Activated CD4-positive, alpha-beta T cell treated with anti-CD3 and anti-CD28 coated beads for 36 hours (primary cell): ENCODE measurements at regions of chr22 and their contacts with region 1.

Region 1: DNA sequence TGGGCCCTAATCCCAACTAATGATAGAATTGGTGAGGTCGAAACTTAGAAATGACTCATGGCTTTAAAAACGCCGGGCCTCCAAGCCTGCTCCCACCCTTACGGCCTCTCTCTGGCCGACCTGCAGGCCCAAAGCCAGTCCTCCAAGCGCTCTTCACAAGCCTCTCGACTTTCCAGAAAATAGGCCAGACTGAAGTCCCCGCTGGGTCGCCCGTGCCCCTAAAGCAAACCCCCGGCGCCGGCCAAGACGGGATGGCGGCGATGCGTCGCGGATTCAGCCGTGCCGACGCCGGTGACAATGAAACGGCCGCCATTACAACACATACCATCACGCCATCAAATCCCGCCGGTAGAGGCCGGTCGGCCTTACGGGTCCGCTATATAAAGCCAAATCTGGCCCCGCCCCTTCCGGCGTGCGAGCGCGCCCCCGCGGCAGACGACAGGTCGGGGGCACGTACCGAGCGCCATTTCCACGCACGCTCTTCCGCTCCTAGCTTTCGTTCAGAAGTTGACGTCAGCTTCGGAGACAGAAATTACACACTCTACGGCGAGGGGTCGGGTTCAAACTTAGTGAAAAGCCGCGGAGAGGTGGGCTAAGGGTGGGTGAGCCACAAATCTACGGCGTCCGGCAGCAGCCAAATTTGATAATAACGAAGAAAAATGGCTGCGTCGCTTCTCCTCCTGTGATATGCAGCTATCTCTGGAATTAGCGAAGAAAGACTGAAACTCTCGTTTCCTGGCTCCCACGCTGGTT is at the start of gene RPL3:
- DNase-seq: peak; percentile 98
- ATAC-seq: peak; percentile 83
- H3K4me3 Mint-ChIP-seq: peak within 1 kb of the TSS; percentile 100
- H3K27ac Mint-ChIP-seq: peak within 1 kb of the TSS; percentile 100
- H3K4me1 Mint-ChIP-seq: peaks cover 32% of the 10 kb centered on the region
- H3K27me3 Mint-ChIP-seq: no peaks in the 10 kb centered on the region
- total RNA-seq, gene RPL3: 2,519 to 3,155 TPM

Region 2: GRCh38 chr22:38705235-38706100 is 614.0 kb before region 1 on chr22 and contains the start of gene GTPBP1:
- CTCF ChIA-PET with region 1: no interaction called
- POLR2A ChIA-PET with region 1: no interaction called
- intact Hi-C with region 1: loop called (anchors 2 kb)
- DNase-seq: peak; percentile 98
- ATAC-seq: peak; percentile 89
- H3K4me3 Mint-ChIP-seq: peak within 1 kb of the TSS; percentile 93
- H3K27ac Mint-ChIP-seq: peak within 1 kb of the TSS; percentile 97
- H3K4me1 Mint-ChIP-seq: peaks cover 53% of the 10 kb centered on the region
- H3K27me3 Mint-ChIP-seq: no peaks in the 10 kb centered on the region
- total RNA-seq, gene GTPBP1: 88.6 to 92.8 TPM

Region 3: DNA sequence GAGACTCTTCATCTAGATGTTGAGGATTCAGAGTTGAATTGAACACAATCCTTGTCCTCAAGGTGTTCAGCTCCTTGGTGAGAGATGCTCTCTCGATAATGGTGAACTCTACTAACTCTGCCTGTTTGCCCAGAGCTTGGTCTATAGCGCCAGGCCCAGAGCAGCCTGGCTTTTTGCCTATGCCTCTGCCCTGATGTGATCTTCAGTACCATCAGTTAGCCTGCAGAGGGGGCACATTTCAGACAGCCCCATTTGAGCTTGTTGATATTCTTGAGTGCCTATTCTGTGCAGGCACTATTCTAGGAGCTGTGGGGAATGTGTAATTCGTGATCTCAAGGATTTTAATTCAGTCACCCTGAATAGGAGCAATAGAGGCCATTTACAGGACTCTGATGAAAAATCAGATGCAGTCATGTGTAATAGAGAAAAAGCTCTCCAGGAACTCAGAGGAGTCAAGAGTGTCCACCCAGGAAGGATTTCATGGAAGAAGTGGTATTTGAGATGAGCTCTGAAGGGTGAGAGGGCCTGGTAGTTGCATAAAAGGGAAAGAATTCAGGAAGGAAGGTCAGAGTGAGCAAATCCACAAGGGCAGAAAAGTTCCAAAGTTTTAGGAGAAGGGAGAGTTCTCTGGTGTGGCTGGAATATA is 594.4 kb before region 1 on chr22:
- CTCF ChIA-PET with region 1: no interaction called
- POLR2A ChIA-PET with region 1: no interaction called
- intact Hi-C with region 1: no loop called
- DNase-seq: peak; percentile 56
- ATAC-seq: peak; percentile 79
- H3K4me3 Mint-ChIP-seq: no peak overlapping the region
- H3K27ac Mint-ChIP-seq: peak overlapping the region; percentile 51
- H3K4me1 Mint-ChIP-seq: no peaks in the 10 kb centered on the region
- H3K27me3 Mint-ChIP-seq: no peaks in the 10 kb centered on the region

Region 4: GRCh38 chr22:39152511-39153219 is 166.8 kb before region 1 on chr22 and contains the start of gene CBX7:
- CTCF ChIA-PET with region 1: interaction called, 4 read pairs
- POLR2A ChIA-PET with region 1: interaction called, 5 read pairs
- intact Hi-C with region 1: loop called (anchors 1 to 5 kb)
- DNase-seq: peak; percentile 95
- ATAC-seq: peak; percentile 83
- H3K4me3 Mint-ChIP-seq: peak within 1 kb of the TSS; percentile 76
- H3K27ac Mint-ChIP-seq: peak within 1 kb of the TSS; percentile 72
- H3K4me1 Mint-ChIP-seq: peaks cover 40% of the 10 kb centered on the region
- H3K27me3 Mint-ChIP-seq: peaks cover 13% of the 10 kb centered on the region
- total RNA-seq, gene CBX7: 19.9 to 20.3 TPM

Region 5: DNA sequence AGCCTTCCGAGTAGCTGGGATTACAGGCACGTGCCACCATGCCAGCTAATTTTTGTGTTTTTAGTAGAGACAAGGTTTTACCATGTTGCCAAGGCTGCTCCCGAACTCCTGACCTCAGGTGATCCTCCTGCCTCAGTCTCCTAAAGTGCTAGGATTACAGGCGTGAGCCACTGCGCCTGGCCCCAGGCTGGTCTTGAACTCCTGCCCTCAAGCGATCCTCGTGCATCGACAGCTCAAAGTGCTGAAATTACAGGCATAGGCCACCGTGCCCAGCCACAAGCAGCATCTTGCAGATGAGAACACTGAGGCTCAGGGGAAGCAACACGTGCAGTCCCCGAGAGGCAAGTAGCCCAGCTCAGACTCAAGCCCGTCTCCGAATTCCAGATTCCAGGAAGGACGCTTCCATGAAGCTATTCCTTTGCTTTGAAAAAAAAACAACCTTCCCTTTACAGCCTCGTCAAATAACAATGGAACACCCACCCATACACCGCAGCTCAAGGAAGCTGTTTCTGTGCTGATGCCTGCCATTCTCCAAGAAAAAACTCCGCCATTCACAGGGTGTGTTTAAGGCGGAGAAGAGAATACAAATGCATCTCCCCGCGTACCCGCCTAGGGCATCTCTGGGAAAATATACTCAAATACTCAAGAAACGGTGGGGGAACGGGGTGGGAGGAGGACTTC is 40.1 kb before region 1 on chr22:
- CTCF ChIA-PET with region 1: no interaction called
- POLR2A ChIA-PET with region 1: no interaction called
- intact Hi-C with region 1: no loop called
- DNase-seq: no peak
- ATAC-seq: no peak
- H3K4me3 Mint-ChIP-seq: no peak overlapping the region
- H3K27ac Mint-ChIP-seq: no peak overlapping the region
- H3K4me1 Mint-ChIP-seq: no peaks in the 10 kb centered on the region
- H3K27me3 Mint-ChIP-seq: peaks cover 8% of the 10 kb centered on the region

Region 6: DNA sequence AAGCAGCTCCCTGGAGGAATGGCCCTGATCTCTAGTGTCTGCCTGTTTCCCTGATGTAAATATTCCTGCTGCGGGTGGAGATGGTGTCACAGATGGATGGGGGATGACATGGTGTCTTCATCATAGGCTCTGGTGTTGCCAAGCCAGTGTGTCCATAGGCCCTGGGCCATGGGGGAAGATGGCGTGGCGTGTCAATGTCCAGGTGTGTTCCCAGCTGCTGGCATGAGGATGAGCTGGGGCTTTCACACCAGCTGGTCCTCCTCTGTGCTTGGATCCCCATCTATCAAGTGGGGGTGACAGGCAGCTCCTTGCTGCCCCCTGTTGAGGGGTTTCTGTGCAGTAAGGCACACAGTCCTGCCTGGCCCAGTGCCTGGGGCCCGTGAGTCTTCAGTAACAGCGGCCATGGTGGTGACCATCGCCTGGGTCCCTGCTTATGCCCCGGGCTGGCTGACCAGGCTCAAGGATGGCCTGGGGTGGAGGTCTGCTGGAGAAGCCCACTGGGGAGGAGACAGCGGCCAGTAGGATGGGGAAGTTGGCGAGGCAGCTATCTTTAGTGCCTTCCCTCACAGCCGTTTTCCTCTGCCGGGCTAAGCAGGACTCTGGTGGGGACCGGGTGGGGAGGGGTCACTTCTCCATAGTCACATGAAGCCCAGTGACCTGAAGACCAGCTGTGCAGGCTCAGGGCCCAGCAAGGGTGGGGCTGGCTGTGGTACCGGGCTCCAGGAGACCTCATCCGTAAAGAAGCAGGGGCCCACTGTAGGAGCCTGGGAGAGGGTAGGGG is 12.7 kb before region 1 on chr22:
- CTCF ChIA-PET with region 1: interaction called, 13 read pairs
- POLR2A ChIA-PET with region 1: interaction called, 27 read pairs
- intact Hi-C with region 1: no loop called
- DNase-seq: peak; percentile 79
- ATAC-seq: peak; percentile 60
- H3K4me3 Mint-ChIP-seq: no peak overlapping the region
- H3K27ac Mint-ChIP-seq: no peak overlapping the region
- H3K4me1 Mint-ChIP-seq: peaks cover 2% of the 10 kb centered on the region
- H3K27me3 Mint-ChIP-seq: no peaks in the 10 kb centered on the region

Region 7: DNA sequence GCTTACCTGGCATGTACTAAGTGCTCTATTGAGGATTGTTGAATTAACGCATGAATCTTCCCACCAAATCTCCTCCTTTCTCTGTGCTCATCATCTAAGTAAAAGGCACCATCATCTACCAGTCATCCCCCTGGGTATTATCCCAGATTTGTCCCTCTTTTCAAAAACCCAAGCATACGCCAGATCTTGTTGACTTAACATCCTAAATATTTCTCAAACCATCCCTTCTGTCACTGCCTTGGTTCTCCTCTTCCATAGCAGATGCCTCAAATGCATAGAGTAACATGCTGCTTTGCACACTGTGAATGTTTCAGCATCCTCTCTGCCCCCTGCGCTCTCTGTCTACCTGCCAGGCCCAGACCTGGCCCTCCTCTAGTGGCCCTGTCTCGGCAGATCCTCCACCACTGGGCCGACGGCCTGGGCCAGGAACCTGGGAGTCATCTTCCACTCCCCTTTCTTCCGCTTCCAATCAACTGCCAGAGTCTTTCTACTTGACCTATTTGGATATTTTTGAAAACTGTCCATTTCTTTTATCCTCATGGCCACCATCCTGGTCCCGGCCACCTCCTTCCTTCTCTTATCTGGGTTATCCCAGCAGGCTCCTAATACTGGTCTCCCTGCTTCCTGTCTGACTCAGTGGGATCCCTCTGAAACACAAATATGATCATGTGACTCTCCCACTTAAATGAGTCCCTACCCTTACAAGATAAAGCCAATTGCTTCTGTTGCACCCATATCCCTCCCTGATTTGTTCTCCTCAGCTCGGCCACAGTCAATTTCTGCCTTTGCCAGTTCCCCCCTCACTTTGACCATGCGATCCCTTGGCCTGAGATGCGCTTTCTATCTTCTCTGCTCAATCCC is 76.7 kb after region 1 on chr22:
- CTCF ChIA-PET with region 1: interaction called, 4 read pairs
- POLR2A ChIA-PET with region 1: interaction called, 9 read pairs
- intact Hi-C with region 1: loop called in 1 of 2 experiments (anchors 1 kb)
- DNase-seq: no peak
- ATAC-seq: no peak
- H3K4me3 Mint-ChIP-seq: no peak overlapping the region
- H3K27ac Mint-ChIP-seq: no peak overlapping the region
- H3K4me1 Mint-ChIP-seq: peaks cover 9% of the 10 kb centered on the region
- H3K27me3 Mint-ChIP-seq: no peaks in the 10 kb centered on the region

Region 8: GRCh38 chr22:39908737-39909136 is 589.3 kb after region 1 on chr22:
- CTCF ChIA-PET with region 1: no interaction called
- POLR2A ChIA-PET with region 1: no interaction called
- intact Hi-C with region 1: loop called in 1 of 2 experiments (anchors 5 kb)
- DNase-seq: peak; percentile 71
- ATAC-seq: peak; percentile 50
- H3K4me3 Mint-ChIP-seq: peak overlapping the region; percentile 86
- H3K27ac Mint-ChIP-seq: peak overlapping the region; percentile 100
- H3K4me1 Mint-ChIP-seq: peaks cover 75% of the 10 kb centered on the region
- H3K27me3 Mint-ChIP-seq: no peaks in the 10 kb centered on the region